Caco-2 (cell line): ENCODE measurements at regions of chr12 and their contacts with region 1.

Region 1: GRCh38 chr12:124917135-124917840 is 2.8 kb upstream of the UBC start:
- DNase-seq: peak; percentile 97 to 99
- H3K4me3 ChIP-seq: peak overlapping the region; percentile 31
- H3K4me3 Mint-ChIP-seq: peak overlapping the region; percentile 98
- H3K27ac Mint-ChIP-seq: peak overlapping the region; percentile 100
- H3K4me1 ChIP-seq: peaks cover 42% of the 10 kb centered on the region
- H3K4me1 Mint-ChIP-seq: peaks cover 49% of the 10 kb centered on the region
- H3K27me3 ChIP-seq: no peaks in the 10 kb centered on the region
- H3K27me3 Mint-ChIP-seq: peaks cover 9% of the 10 kb centered on the region
- CTCF ChIP-seq: no peak

Region 2: DNA sequence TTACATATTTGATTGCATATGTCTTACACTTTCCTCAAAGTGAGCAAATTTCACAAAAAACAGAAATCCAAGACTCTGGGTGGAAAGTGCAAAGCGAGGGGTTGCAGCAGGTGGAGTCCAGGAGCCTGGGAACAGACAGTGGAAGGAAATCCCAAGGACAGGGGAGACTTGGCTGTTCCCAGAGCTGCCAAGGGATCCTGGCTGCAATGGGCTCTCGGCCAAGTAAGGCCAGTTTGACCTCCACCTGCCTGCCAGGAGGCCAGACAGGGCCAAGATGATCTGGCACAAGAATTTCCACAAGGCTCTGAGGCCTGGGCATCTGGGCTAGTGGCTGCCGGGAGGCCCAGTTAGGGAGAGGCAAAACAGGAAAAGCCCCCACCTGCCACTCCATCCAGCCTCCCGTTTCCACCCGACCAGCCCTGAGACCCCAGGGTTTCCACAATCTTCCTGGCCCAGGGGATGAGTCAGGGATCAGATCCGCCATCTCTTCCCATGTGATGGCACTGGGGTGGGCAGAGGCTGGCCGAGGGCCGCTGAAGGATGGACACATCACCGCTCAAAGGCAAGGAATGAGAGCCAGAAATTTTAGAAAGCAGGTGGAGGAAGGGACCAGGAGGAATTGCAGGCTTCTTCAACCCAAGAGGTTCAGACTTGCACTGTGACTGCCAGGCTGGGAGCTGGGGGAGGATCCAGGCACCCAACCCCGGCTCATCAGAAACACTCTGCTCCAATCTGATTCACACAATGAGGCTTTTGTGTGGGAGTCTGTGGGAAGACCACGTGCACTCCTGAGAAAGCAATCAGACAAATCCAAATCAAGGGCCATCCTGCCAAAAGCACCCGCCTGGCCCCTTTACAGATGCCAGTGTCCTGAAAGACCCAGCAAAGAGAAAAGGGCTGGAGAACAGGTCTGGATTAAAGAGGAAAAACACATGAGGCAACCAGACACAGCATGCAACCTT is 69.9 kb before region 1 on chr12:
- CTCF ChIA-PET with region 1: no interaction called
- POLR2A ChIA-PET with region 1: no interaction called
- intact Hi-C with region 1: no loop called
- DNase-seq: no peak
- H3K4me3 ChIP-seq: no peak overlapping the region
- H3K4me3 Mint-ChIP-seq: no peak overlapping the region
- H3K27ac Mint-ChIP-seq: no peak overlapping the region
- H3K4me1 ChIP-seq: peaks cover 17% of the 10 kb centered on the region
- H3K4me1 Mint-ChIP-seq: peaks cover 14% of the 10 kb centered on the region
- H3K27me3 ChIP-seq: no peaks in the 10 kb centered on the region
- H3K27me3 Mint-ChIP-seq: no peaks in the 10 kb centered on the region
- CTCF ChIP-seq: no peak

Region 3: GRCh38 chr12:124878795-124879516 is 38.3 kb before region 1 on chr12:
- CTCF ChIA-PET with region 1: no interaction called
- POLR2A ChIA-PET with region 1: no interaction called
- intact Hi-C with region 1: no loop called
- DNase-seq: no peak
- H3K4me3 ChIP-seq: no peak overlapping the region
- H3K4me3 Mint-ChIP-seq: no peak overlapping the region
- H3K27ac Mint-ChIP-seq: no peak overlapping the region
- H3K4me1 ChIP-seq: peaks cover 21% of the 10 kb centered on the region
- H3K4me1 Mint-ChIP-seq: peaks cover 10% of the 10 kb centered on the region
- H3K27me3 ChIP-seq: no peaks in the 10 kb centered on the region
- H3K27me3 Mint-ChIP-seq: no peaks in the 10 kb centered on the region
- CTCF ChIP-seq: no peak

Region 4: DNA sequence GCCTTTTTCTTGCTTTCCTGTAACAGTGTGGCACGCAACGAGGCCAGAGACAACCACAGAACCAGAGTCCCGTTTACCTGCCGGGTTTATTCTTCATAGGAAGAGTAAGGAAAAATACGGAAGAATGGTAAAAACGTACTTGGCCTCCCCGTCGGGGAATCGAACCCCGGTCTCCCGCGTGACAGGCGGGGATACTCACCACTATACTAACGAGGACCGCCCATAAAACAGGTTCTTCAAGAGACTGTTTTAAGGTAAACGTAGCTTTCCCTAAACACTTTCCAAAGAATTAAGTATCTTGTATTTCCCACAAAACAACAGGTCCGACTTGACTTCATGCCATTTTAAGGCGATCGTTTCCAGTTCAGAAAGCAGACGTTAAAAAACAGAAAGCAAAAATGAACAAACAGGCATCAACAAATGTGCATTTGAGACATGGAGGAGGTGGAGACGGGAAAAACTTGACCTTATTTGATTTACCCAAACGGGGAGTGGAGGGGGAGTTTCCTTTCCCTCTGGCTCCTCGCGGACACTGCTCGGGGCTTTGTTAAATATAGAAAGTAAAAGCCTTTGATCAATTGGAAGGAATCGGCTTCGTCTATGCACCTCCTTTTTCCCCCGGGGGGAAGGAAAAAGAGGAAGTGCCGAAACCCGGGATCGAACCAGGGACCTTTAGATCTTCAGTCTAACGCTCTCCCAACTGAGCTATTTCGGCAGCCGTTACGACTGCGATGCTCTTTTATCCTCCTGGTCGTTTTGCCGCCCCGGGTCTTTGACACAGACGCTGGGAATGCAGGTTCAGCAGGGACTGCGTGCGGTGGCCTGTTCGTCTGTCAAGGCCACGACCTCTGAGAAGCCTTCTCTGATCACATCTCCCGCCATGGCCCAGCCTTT is 10.2 kb after region 1 on chr12:
- CTCF ChIA-PET with region 1: interaction called, 3 read pairs
- POLR2A ChIA-PET with region 1: interaction called, 6 read pairs
- intact Hi-C with region 1: loop called (anchors 1 kb)
- DNase-seq: peak; percentile 92 to 95
- H3K4me3 ChIP-seq: peak overlapping the region; percentile 86
- H3K4me3 Mint-ChIP-seq: peak overlapping the region; percentile 92
- H3K27ac Mint-ChIP-seq: peak overlapping the region; percentile 100
- H3K4me1 ChIP-seq: peaks cover 5% of the 10 kb centered on the region; the same call in 1 of the 2 replicates
- H3K4me1 Mint-ChIP-seq: peaks cover 27% of the 10 kb centered on the region
- H3K27me3 ChIP-seq: no peaks in the 10 kb centered on the region
- H3K27me3 Mint-ChIP-seq: peaks cover 5% of the 10 kb centered on the region
- CTCF ChIP-seq: no peak